ENCODE measurements at regions of chr3 and their contacts with region 1.

Region 1: GRCh38 chr3:66816090-66816761 is 181.9 kb upstream of the KBTBD8 start:
- DNase-seq: no peak
- H3K4me3 ChIP-seq: no peak overlapping the region
- H3K27ac ChIP-seq: no peak overlapping the region
- H3K4me1 ChIP-seq: no peaks in the 10 kb centered on the region
- H3K27me3 ChIP-seq: no peaks in the 10 kb centered on the region
- CTCF ChIP-seq: peak; percentile 47 to 58 (median 55)
- EP300 ChIP-seq: no peak
- POLR2A ChIP-seq: no peak

Region 2: GRCh38 chr3:66253790-66254620 is 562.2 kb before region 1 on chr3:
- intact Hi-C with region 1: loop called in 2 of 4 experiments (anchors 5 to 10 kb)
- DNase-seq: no peak
- H3K4me3 ChIP-seq: no peak overlapping the region
- H3K27ac ChIP-seq: no peak overlapping the region
- H3K4me1 ChIP-seq: no peaks in the 10 kb centered on the region
- H3K27me3 ChIP-seq: no peaks in the 10 kb centered on the region
- CTCF ChIP-seq: peak; percentile 33 to 53 (median 43)
- EP300 ChIP-seq: no peak
- POLR2A ChIP-seq: no peak

Region 3: GRCh38 chr3:66276705-66277274 is 539.4 kb before region 1 on chr3:
- intact Hi-C with region 1: loop called in 3 of 4 experiments (anchors 5 kb)
- DNase-seq: peak in 4 of 5 donors; percentile 39 to 73 (median 52)
- H3K4me3 ChIP-seq: no peak overlapping the region
- H3K27ac ChIP-seq: no peak overlapping the region
- H3K4me1 ChIP-seq: no peaks in the 10 kb centered on the region
- H3K27me3 ChIP-seq: no peaks in the 10 kb centered on the region
- CTCF ChIP-seq: peak; percentile 28 to 63 (median 60)
- EP300 ChIP-seq: no peak
- POLR2A ChIP-seq: no peak

Region 4: DNA sequence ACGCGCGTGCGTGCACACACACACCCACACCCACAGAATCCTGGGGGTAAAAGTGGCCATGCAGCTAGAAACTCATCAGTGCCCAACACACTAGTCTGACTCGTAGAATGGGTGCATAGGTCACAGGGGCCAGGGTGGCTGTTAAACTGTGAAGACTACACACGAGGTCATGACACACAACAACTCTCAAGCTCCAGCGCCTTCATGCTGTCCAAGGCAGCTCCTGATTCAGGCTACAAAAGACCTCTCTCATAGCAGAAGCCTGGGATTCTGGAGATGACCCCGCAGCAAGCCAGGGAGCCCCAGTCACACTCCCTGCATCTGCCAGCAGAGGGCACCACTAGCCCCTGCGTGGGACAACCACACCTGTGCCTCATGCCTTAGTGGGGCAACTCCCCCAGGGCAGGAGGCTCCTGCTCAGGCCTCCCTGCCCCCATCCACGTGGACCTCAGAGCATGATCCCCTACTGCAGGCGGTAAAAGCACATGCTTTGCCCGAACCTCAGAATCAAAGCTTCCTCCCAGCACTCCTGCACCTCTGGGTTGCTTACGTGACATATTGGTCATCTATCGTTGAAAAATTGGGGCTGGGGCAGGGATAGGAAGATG is 408.5 kb before region 1 on chr3:
- intact Hi-C with region 1: loop called (anchors 5 to 10 kb)
- DNase-seq: peak; percentile 58 to 84 (median 79)
- H3K4me3 ChIP-seq: no peak overlapping the region
- H3K27ac ChIP-seq: no peak overlapping the region
- H3K4me1 ChIP-seq: peaks cover 10% of the 10 kb centered on the region
- H3K27me3 ChIP-seq: no peaks in the 10 kb centered on the region
- CTCF ChIP-seq: peak; percentile 73 to 80 (median 79)
- EP300 ChIP-seq: no peak
- POLR2A ChIP-seq: no peak

Region 5: GRCh38 chr3:66500576-66501482 is 315.4 kb before region 1 on chr3 and contains the start of gene LRIG1:
- intact Hi-C with region 1: loop called in 2 of 4 experiments (anchors 10 kb)
- DNase-seq: peak; percentile 99 to 100 (median 100)
- H3K4me3 ChIP-seq: peak within 1 kb of the TSS; percentile 99
- H3K27ac ChIP-seq: peak within 1 kb of the TSS; percentile 90 to 94
- H3K4me1 ChIP-seq: peaks cover 6% of the 10 kb centered on the region
- H3K27me3 ChIP-seq: no peaks in the 10 kb centered on the region
- CTCF ChIP-seq: peak; percentile 34 to 64 (median 41)
- EP300 ChIP-seq: no peak
- POLR2A ChIP-seq: peak; percentile 61
- total RNA-seq, gene LRIG1: 29.1 to 60.4 (median 42.6) TPM

Measured in ovary (tissue), 10 donors.